Activated T-helper 1 cell treated with anti-CD3 and anti-CD28 coated beads, Interleukin-12 subunit alpha, Interleukin-12 subunit beta, Interleukin-2, Interleukin-4 antibody, amounts not matched to agents 30 ng/mL and 10 ng/mL and 1 ng/mL, durations not matched to agents 14 hours and 24 hours and 36 hours (primary cell): ENCODE measurements at regions of chr3 and their contacts with region 1.

Region 1: GRCh38 chr3:59575113-59576001 is 525.5 kb upstream of the CFAP20DC start:
- DNase-seq: peak; percentile 72
- H3K4me3 Mint-ChIP-seq: no peak overlapping the region
- H3K27ac Mint-ChIP-seq: peak overlapping the region; percentile 15
- H3K4me1 Mint-ChIP-seq: peaks cover 10% of the 10 kb centered on the region
- H3K27me3 Mint-ChIP-seq: no peaks in the 10 kb centered on the region

Region 2: GRCh38 chr3:59313365-59313764 is 262.0 kb before region 1 on chr3:
- intact Hi-C with region 1: loop called (anchors 1 kb)
- DNase-seq: peak; percentile 22
- H3K4me3 Mint-ChIP-seq: no peak overlapping the region
- H3K27ac Mint-ChIP-seq: peak overlapping the region; percentile 49
- H3K4me1 Mint-ChIP-seq: peaks cover 47% of the 10 kb centered on the region
- H3K27me3 Mint-ChIP-seq: peaks cover 2% of the 10 kb centered on the region

Region 3: GRCh38 chr3:59809710-59810444 is 234.5 kb after region 1 on chr3:
- intact Hi-C with region 1: loop called (anchors 1 kb)
- DNase-seq: no peak
- H3K4me3 Mint-ChIP-seq: no peak overlapping the region
- H3K27ac Mint-ChIP-seq: no peak overlapping the region
- H3K4me1 Mint-ChIP-seq: no peaks in the 10 kb centered on the region
- H3K27me3 Mint-ChIP-seq: no peaks in the 10 kb centered on the region

Region 4: DNA sequence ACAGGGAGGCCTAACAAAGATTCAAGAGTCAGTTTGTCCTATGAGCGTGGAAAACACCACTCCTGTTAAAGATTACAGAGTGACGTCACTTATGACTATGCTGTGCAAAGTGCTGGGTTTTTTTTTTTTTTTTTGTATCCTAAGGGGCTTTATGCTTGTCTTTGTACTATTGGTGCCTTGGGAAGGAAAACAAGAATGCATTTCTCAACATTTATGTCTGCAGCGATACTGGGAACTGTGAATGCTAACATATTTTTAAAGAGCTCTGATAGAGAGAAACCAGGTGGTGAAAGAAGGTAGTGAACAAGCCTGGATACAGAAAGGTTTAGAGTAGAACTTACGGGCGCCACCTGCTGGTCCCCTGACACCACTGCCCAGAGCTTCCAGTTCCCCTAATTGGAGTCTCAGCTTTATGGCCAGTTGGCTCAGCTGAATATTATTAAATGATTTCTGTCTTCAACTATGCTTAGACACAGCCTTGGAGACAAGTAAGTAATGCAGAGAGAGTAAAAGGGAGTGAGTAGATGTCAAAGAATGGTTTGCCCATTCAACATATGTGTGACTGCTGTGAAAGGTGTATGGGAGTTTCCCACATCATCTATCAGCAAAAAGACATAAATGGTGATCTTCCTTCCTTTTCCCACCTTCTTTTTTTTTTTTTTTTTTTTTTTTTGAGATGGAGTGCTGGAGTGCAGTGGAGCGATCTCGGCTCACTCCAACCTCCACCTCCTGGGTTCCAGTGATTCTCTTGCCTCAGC is 282.4 kb after region 1 on chr3:
- intact Hi-C with region 1: loop called (anchors 1 kb)
- DNase-seq: peak; percentile 51
- H3K4me3 Mint-ChIP-seq: no peak overlapping the region
- H3K27ac Mint-ChIP-seq: peak overlapping the region; percentile 19
- H3K4me1 Mint-ChIP-seq: peaks cover 12% of the 10 kb centered on the region
- H3K27me3 Mint-ChIP-seq: no peaks in the 10 kb centered on the region

Region 5: GRCh38 chr3:61381745-61382392 is 1806.5 kb after region 1 on chr3:
- intact Hi-C with region 1: loop called (anchors 2 kb)
- DNase-seq: no peak
- H3K4me3 Mint-ChIP-seq: no peak overlapping the region
- H3K27ac Mint-ChIP-seq: no peak overlapping the region
- H3K4me1 Mint-ChIP-seq: peaks cover 5% of the 10 kb centered on the region
- H3K27me3 Mint-ChIP-seq: peaks cover 4% of the 10 kb centered on the region